H1 (cell line): ENCODE measurements at regions of chr4 and their contacts with region 1.

Region 1: DNA sequence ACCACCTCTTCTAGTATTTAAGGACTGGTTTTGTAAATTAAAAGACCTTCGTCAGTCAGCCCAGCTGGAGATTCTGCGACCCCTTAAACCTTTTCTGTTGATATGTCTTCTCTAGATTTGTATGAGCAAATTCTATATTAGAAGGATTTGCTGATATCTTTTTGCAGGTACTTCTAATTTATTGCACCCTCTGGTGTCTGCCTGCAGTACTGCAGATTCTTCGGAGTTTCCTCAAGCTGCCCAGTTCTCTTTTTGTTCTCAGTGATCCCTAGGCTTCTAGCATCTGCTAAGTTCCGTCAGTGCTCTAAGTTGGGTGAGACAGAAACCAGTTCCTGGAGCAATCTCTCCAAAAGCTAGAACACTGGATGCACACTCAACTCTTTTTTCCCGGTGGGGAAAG is 545.2 kb downstream of the C4orf33 start:
- DNase-seq: peak; percentile 23 to 86
- H3K4me3 ChIP-seq: no peak overlapping the region
- H3K27ac ChIP-seq: no peak overlapping the region
- H3K4me1 ChIP-seq: no peaks in the 10 kb centered on the region
- H3K27me3 ChIP-seq: no peaks in the 10 kb centered on the region
- CTCF ChIP-seq: peak in 2 of 3 experiments; percentile 50 to 68; a peak in 2 of 4 replicates
- EP300 ChIP-seq: no peak
- POLR2A ChIP-seq: no peak
- RAD21 ChIP-seq: peak; percentile 58 to 66

Region 2: DNA sequence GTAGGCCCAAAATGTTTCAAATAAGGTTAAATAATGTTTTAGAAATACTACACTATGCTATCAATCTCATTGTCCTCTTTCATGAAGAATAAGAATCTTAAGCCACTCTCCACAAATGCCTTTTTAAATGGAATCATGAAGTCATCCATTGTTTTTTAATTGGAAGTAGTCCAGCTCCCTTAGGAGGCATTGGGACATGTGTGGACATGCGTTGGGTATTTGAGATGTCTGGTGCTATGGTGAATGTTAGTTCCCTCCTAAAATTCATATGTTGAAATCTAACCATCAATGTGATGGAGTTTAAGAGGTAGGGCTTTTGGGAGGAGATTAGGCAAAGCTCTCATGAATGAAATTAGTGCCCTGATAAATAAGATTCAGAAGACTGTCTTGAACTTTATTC is 256.2 kb before region 1 on chr4:
- CTCF ChIA-PET with region 1: interaction called, 10 read pairs
- POLR2A ChIA-PET with region 1: no interaction called
- DNase-seq: no peak
- H3K4me3 ChIP-seq: no peak overlapping the region
- H3K27ac ChIP-seq: no peak overlapping the region
- H3K4me1 ChIP-seq: no peaks in the 10 kb centered on the region
- H3K27me3 ChIP-seq: no peaks in the 10 kb centered on the region
- CTCF ChIP-seq: no peak
- EP300 ChIP-seq: no peak
- POLR2A ChIP-seq: no peak
- RAD21 ChIP-seq: no peak

Region 3: GRCh38 chr4:129822708-129823504 is 181.7 kb after region 1 on chr4:
- CTCF ChIA-PET with region 1: no interaction called
- POLR2A ChIA-PET with region 1: no interaction called
- DNase-seq: no peak
- H3K4me3 ChIP-seq: no peak overlapping the region
- H3K27ac ChIP-seq: no peak overlapping the region
- H3K4me1 ChIP-seq: no peaks in the 10 kb centered on the region
- H3K27me3 ChIP-seq: no peaks in the 10 kb centered on the region
- CTCF ChIP-seq: no peak
- EP300 ChIP-seq: no peak
- POLR2A ChIP-seq: no peak
- RAD21 ChIP-seq: no peak